ENCODE measurements at regions of chr5 and their contacts with region 1.

Region 1: DNA sequence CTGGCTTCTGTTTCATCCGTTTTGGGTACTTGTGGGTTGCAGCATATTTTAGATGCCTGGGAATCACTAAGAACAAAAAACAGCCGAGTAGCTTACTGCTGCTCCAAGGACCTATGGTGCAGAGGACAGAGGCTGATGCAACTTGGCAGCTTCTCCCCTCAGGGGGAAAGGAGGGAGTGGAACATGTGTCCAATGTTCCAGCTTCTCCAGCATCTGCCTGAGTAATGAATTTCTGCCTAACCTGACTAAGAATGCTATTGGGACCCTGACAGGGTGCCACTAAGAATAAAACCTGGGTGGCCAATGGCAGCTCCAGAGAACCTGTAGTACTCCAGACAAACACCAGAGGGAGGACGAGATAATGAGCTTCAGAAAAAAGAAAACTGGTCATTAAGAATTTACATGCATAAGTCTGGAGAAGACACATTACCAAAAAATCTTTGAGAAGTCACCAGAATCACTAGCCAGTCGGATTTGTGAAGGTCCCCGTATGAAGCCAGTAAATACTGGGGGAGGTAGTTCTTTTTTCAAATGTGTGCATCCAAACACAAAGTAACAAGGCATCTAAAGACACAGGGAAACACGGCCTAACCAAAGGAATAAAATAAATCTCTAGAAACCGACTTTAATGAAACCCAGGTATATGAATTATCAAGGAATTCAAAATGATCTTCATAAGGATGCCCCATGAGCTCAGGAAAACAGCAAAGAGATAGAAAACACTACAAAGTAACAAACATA is 293.5 kb downstream of the HINT1 start:
- DNase-seq: peak; percentile 18 to 75
- ATAC-seq: peak in 2 of 3 donors; percentile 59 to 62
- H3K4me3 ChIP-seq: no peak overlapping the region
- H3K4me3 Mint-ChIP-seq: no peak overlapping the region
- H3K27ac ChIP-seq: no peak overlapping the region
- H3K27ac Mint-ChIP-seq: no peak overlapping the region
- H3K4me1 ChIP-seq: no peaks in the 10 kb centered on the region
- H3K4me1 Mint-ChIP-seq: no peaks in the 10 kb centered on the region
- H3K27me3 ChIP-seq: no peaks in the 10 kb centered on the region
- H3K27me3 Mint-ChIP-seq: peaks cover 0 to 4% of the 10 kb centered on the region in 2 donors
- CTCF ChIP-seq: peak; percentile 70

Region 2: DNA sequence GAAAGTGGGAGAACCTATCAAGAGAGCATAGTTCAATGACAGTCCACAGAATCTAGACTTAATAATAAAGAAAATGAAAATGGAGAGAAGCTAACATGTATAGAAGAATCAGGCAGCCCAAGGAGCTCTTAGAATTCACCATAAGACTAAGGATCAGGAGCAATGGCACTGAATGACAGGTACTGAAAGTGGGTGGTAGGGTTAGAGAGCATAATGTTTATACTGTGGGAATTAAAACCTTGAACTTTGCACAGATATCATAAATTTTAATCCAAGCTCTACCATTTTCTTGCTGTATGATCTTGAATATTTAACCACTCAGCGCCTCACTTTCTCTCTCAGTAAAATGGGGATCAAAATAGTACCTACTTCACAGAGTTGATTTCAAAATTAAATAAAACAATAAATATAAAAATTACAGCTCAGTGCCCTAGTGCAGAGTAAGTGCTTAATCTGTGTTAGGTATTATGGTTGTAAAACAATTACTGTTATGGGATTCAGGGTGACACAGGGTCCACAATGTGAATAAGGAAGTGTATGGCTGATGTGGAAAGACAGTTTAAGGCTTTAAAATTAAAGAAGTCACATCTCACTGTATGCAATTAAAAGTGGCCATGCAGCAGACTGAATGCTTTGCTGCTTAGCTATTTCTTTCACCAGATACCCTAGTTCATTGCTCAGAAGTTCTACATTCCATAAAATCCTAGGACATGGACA is 26.3 kb before region 1 on chr5:
- intact Hi-C with region 1: no loop called
- DNase-seq: no peak
- ATAC-seq: no peak
- H3K4me3 ChIP-seq: no peak overlapping the region
- H3K4me3 Mint-ChIP-seq: no peak overlapping the region
- H3K27ac ChIP-seq: no peak overlapping the region
- H3K27ac Mint-ChIP-seq: no peak overlapping the region
- H3K4me1 ChIP-seq: no peaks in the 10 kb centered on the region
- H3K4me1 Mint-ChIP-seq: no peaks in the 10 kb centered on the region
- H3K27me3 ChIP-seq: no peaks in the 10 kb centered on the region
- H3K27me3 Mint-ChIP-seq: peaks cover 18 to 43% of the 10 kb centered on the region in 2 donors
- CTCF ChIP-seq: no peak

Region 3: DNA sequence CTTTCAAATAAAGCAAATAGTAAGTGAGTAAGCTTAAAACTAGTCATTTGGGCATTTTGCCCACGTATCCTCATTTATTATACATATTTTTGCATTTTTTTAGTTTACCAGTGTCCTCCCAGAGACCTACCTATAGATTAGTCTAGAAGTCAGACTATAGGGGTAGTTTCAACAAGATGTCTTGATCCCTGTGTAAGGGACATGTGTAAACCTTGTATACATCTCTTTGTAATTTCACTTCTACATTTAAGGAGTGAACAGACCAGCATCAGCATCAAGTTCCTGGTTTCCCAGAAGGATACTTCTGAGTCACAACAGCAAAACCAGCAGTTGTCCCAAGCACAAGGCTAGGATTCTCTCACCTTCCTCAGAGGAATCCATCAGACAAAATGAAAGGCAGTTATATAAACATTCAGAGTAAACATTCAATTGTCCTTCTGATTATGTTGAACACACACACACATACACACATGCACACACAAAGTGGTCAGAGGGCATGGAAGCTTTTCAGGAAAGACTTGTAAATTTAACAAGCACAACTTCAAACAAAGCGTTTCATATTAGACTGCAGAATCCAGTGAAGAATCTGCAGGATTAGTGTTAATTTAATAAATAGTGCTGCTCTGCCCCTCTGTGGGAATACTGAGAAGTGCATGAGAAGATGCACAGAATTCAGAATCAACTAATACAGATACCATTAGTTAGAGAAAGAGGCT is 238.2 kb after region 1 on chr5:
- intact Hi-C with region 1: loop called (anchors 1 kb)
- DNase-seq: peak in 1 of 2 donors; percentile 68
- ATAC-seq: peak; percentile 62 to 80 (median 73)
- H3K4me3 ChIP-seq: no peak overlapping the region
- H3K4me3 Mint-ChIP-seq: no peak overlapping the region
- H3K27ac ChIP-seq: no peak overlapping the region
- H3K27ac Mint-ChIP-seq: no peak overlapping the region
- H3K4me1 ChIP-seq: no peaks in the 10 kb centered on the region
- H3K4me1 Mint-ChIP-seq: no peaks in the 10 kb centered on the region
- H3K27me3 ChIP-seq: no peaks in the 10 kb centered on the region
- H3K27me3 Mint-ChIP-seq: no peaks in the 10 kb centered on the region
- CTCF ChIP-seq: peak; percentile 86

Region 4: GRCh38 chr5:131417240-131417869 is 545.8 kb after region 1 on chr5:
- intact Hi-C with region 1: loop called (anchors 1 kb)
- DNase-seq: peak; percentile 70 to 92
- ATAC-seq: peak; percentile 74 to 79 (median 76)
- H3K4me3 ChIP-seq: no peak overlapping the region
- H3K4me3 Mint-ChIP-seq: no peak overlapping the region
- H3K27ac ChIP-seq: no peak overlapping the region
- H3K27ac Mint-ChIP-seq: peak overlapping the region; percentile 58 to 71
- H3K4me1 ChIP-seq: peaks cover 3% of the 10 kb centered on the region
- H3K4me1 Mint-ChIP-seq: peaks cover 20 to 22% of the 10 kb centered on the region in 2 donors
- H3K27me3 ChIP-seq: no peaks in the 10 kb centered on the region
- H3K27me3 Mint-ChIP-seq: no peaks in the 10 kb centered on the region
- CTCF ChIP-seq: peak; percentile 96

Measured in natural killer cell (primary cell).